A549 (cell line): ENCODE measurements at regions of chr19 and their contacts with region 1.

Region 1: DNA sequence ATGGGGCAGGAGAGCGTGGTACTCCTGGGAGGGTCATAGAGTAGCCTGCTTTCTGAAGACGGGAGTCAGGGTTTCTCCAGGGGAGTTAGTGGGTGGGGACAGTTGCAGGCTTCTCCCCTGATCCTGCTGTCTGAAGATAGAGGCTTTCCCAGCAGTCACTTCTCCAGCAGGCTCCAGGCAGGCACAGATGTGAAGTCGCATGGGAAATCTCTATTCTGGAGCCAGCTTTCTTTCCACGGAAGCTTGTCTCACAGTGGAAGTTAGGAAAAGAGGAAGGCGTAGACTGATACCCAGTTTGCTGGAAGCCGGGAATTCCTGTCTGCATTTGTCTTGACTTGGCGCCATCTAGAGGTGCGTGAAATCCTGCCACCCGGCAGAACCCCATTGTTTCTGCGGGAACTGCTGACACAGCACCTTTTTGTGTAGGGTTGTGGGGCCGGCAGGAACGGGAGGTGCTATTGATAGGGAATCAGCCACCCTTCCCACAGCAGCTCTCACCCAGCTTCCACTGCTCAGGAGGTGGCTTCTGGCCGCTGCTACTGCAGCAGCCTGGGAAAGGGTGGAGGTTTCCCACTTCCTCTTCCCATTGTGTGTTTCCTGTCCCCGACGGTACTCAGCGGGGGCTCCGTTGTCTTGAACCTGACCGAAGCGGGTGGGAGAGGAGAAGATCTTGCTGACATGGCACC is 28.5 kb upstream of the NPAS1 start:
- DNase-seq: peak; percentile 77 to 85
- ATAC-seq: peak; percentile 70 to 87
- H3K4me3 ChIP-seq: no peak overlapping the region
- H3K27ac ChIP-seq: peak overlapping the region; percentile 31 to 65; a peak in 3 of 6 replicates
- H3K4me1 ChIP-seq: peaks cover 9% of the 10 kb centered on the region; the same call in 2 of the 3 replicates
- CTCF ChIP-seq: peak; percentile 97
- EP300 ChIP-seq: no peak
- POLR2A ChIP-seq: no peak
- RAD21 ChIP-seq: peak; percentile 99

Region 2: GRCh38 chr19:46788262-46788967 is 202.7 kb before region 1 on chr19 and contains the start of gene SLC1A5:
- CTCF ChIA-PET with region 1: interaction called, 10 read pairs
- POLR2A ChIA-PET with region 1: no interaction called
- DNase-seq: peak; percentile 99
- ATAC-seq: peak; percentile 51 to 77
- H3K4me3 ChIP-seq: peak within 1 kb of the TSS; percentile 66
- H3K27ac ChIP-seq: peak within 1 kb of the TSS; percentile 96 to 97
- H3K4me1 ChIP-seq: peaks cover 40% of the 10 kb centered on the region
- CTCF ChIP-seq: peak; percentile 4; the same call in 1 of the 3 replicates
- EP300 ChIP-seq: 0 out of 5 replicates have a peak, but pooled peaks of 1 of the 2 experiments have one; percentile 13
- POLR2A ChIP-seq: peak; percentile 100
- RAD21 ChIP-seq: peak; percentile 20 to 28; a peak in 3 of 5 replicates
- polyA plus RNA-seq, gene SLC1A5: 302 and 306 TPM in 2 replicates

Region 3: DNA sequence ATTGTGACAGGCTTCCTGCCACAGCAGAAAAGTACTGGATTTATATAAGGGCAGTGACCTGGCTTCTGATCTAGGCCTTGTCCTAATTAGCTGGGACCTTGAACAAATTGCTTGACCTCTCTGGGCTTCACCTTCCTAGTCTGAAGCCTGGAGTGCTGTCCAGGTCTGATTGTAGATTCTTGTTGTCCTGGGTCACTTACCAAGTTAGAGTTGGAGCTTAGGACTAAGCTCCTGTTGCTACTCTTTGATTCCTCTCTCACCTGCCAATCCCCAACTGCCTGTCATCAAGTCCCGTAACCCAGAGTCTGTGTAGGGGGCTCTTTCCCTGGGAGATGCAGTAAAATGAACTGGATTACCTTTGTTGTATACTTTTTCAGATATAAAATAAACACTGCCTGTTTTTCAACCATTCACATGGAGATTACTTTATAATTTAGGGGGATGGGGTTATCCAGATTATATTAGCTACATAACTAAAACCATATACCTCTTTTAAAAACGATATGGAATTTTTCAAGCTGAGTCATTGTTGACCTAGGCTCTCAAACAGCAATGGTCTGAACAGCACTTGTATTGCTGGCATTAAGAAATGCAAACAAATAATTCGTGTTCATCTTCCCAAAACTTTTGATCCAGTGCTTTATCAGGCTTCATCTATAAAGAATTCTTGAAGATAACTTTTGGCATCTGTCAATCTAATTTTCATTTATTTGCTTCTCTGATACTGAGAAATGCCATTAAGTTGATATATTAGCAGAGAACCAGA is 124.6 kb before region 1 on chr19:
- CTCF ChIA-PET with region 1: interaction called, 47 read pairs
- POLR2A ChIA-PET with region 1: no interaction called
- DNase-seq: peak; percentile 58 to 62
- ATAC-seq: peak in 1 of 2 experiments; percentile 60; a peak in 3 of 6 replicates
- H3K4me3 ChIP-seq: peak overlapping the region; percentile 4; the same call in 1 of the 3 replicates
- H3K27ac ChIP-seq: peak overlapping the region; percentile 62 to 81
- H3K4me1 ChIP-seq: peaks cover 76% of the 10 kb centered on the region
- CTCF ChIP-seq: no peak
- EP300 ChIP-seq: peak in 1 of 2 experiments; percentile 37; a peak in 1 of 5 replicates
- POLR2A ChIP-seq: no peak
- RAD21 ChIP-seq: no peak

Region 4: DNA sequence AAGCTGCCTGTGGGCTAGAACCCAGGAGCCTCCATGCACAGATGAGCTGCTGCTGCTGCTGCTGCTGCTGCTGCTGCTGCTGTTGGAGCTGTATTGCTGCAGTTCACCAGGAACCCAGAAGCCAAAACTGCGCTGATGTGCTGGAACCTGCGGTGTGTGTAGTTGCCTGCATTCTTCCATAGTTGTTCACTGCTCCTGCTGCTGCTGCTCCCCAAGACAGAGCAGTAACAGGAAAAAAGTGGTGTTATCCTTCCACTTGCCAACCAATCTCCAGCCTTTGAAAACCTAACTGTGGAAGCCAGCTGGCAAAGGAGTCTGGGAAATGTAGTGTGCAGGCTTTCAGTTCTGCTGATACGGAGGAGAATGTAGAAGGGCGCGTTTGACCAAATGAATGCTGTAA is 92.4 kb before region 1 on chr19:
- CTCF ChIA-PET with region 1: interaction called, 52 read pairs
- POLR2A ChIA-PET with region 1: no interaction called
- DNase-seq: no peak
- ATAC-seq: peak in 1 of 2 experiments; percentile 49; a peak in 3 of 6 replicates
- H3K4me3 ChIP-seq: no peak overlapping the region
- H3K27ac ChIP-seq: no peak overlapping the region
- H3K4me1 ChIP-seq: peaks cover 53% of the 10 kb centered on the region
- CTCF ChIP-seq: no peak
- EP300 ChIP-seq: no peak
- POLR2A ChIP-seq: no peak
- RAD21 ChIP-seq: no peak

Region 5: GRCh38 chr19:46932346-46932745 is 58.8 kb before region 1 on chr19:
- CTCF ChIA-PET with region 1: interaction called, 83 read pairs
- POLR2A ChIA-PET with region 1: no interaction called
- DNase-seq: no peak
- ATAC-seq: peak; percentile 23 to 59; a peak in 5 of 6 replicates
- H3K4me3 ChIP-seq: no peak overlapping the region
- H3K27ac ChIP-seq: peak overlapping the region in 1 of 2 experiments; percentile 43; a peak in 2 of 6 replicates
- H3K4me1 ChIP-seq: peaks cover 89% of the 10 kb centered on the region
- CTCF ChIP-seq: no peak
- EP300 ChIP-seq: no peak
- POLR2A ChIP-seq: no peak
- RAD21 ChIP-seq: no peak

Region 6: DNA sequence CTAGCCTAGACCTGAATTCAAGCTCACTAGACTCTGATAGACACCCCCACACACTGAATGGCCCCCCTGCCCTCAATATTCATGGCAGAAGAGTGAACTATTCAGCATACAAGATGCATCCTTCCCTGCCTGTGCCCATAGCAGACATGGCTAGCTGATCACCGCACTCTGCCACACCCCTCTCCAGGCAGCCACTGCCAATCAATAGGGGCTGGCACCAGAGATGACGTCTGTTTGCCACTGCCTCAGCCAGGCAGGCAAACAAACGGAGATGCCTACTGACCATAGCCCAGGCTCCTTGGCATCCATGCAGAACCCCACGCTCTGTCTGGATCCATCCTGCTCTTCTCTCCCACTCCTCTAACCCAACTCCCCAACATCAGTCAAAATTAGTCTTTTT is 14.7 kb after region 1 on chr19:
- CTCF ChIA-PET with region 1: interaction called, 156 read pairs
- POLR2A ChIA-PET with region 1: no interaction called
- DNase-seq: peak in 1 of 2 experiments; percentile 67
- ATAC-seq: peak; percentile 6 to 32; a peak in 3 of 6 replicates
- H3K4me3 ChIP-seq: no peak overlapping the region
- H3K27ac ChIP-seq: no peak overlapping the region
- H3K4me1 ChIP-seq: peaks cover 4% of the 10 kb centered on the region; the same call in 1 of the 3 replicates
- CTCF ChIP-seq: no peak
- EP300 ChIP-seq: no peak
- POLR2A ChIP-seq: no peak
- RAD21 ChIP-seq: no peak